ENCODE measurements at regions of chr11 and their contacts with region 1.

Region 1: DNA sequence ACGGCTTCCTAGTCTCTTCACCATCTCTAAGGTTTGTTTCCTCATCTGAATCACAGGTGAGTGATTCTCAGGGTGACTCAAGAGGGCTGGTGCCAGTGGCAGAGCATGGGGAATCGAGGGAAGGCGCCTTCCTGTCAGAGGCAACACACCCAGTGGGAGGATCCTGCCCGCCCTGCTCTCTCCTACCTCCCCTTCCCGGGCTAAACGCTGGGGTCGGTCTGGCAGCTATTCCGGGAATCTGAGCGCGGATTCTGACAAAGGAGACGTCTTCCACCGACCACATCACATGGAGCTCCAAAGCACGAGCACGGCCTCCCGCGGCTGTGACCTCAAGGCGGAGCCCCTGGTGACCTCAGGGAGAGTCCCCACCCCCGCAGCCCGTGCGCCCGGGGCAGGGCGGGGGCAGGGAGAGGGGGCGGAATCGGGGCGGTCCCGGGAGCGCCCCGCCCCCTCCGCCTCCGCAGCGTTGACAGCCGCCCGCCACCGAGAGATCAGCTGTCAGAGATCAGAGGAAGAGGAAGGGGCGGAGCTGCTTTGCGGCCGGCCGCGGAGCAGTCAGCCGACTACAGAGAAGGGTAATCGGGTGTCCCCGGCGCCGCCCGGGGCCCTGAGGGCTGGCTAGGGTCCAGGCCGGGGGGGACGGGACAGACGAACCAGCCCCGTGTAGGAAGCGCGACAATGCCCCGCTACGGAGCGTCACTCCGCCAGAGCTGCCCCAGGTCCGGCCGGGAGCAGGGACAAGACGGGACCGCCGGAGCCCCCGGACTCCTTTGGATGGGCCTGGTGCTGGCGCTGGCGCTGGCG is at the start of gene SMPD1:
- DNase-seq: peak; percentile 95 to 97
- H3K4me3 ChIP-seq: peak within 1 kb of the TSS; percentile 64 to 81
- H3K27ac ChIP-seq: peak within 1 kb of the TSS; percentile 81 to 92
- H3K4me1 ChIP-seq: peaks cover 0 to 23% (median 13%) of the 10 kb centered on the region in 4 donors
- H3K27me3 ChIP-seq: no peaks in the 10 kb centered on the region
- CTCF ChIP-seq: no peak

Region 2: DNA sequence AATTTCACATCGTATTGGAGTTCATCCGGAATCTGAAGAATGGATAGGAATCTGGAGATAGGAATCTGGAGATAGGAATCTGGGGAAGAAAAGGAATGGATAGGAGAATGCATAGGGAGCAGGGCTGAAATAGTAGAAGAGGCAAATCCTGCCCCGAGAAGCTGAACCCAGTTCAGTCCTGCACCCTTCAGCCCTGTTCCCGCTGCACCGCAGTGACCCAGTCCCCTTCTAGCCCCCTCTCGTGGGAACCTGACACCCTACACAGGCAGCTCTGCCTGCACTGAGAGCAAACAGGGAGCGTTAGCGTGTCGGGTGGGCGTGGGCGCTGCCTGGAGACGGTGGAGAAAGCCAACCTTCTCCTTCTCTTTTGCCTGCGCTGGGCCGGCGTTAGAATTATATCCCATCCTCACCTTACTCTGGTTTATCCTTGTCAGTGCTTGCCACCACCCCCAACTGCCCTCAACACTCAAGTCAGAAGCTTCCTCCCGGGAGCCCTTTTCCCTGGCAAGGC is 131.5 kb before region 1 on chr11:
- intact Hi-C with region 1: no loop called
- DNase-seq: no peak
- H3K4me3 ChIP-seq: peak overlapping the region; percentile 33 to 50
- H3K27ac ChIP-seq: no peak overlapping the region
- H3K4me1 ChIP-seq: peaks cover 0 to 19% (median 16%) of the 10 kb centered on the region in 4 donors
- H3K27me3 ChIP-seq: peaks cover 0 to 50% of the 10 kb centered on the region in 2 donors
- CTCF ChIP-seq: no peak

Region 3: DNA sequence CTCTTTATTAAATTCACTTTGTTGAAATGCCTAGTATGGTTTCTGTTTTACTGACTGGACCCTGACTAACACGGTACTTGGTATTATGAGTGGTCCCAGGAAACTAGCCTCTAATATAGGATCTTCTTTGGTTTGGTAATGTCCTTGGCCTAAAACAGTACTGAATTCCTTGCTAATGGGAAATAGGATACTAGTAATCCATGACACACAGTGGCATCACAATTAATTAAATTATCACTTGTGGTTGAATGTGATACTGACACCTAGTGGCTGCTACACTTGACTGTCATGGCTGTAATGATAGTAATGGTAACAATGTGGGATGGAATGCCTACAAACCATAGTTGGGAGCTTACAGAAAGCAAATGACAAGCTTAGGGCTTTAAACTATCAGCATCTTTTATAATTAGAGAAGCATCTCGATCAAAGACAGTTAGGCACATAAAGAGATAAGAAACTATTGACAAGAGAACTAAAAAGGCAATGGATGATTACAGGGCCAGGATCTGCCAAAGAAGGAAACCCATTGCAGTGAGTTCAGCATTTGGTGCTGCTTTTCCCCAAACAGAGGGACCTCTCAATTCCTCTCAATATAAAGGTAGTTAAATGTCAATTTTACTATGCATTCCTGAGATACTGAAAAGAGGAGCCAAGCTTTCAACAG is 115.6 kb after region 1 on chr11:
- intact Hi-C with region 1: loop called (anchors 10 kb)
- DNase-seq: no peak
- H3K4me3 ChIP-seq: no peak overlapping the region
- H3K27ac ChIP-seq: no peak overlapping the region
- H3K4me1 ChIP-seq: no peaks in the 10 kb centered on the region
- H3K27me3 ChIP-seq: no peaks in the 10 kb centered on the region
- CTCF ChIP-seq: peak; percentile 70 to 74

Region 4: GRCh38 chr11:6663794-6664469 is 273.8 kb after region 1 on chr11:
- intact Hi-C with region 1: no loop called
- DNase-seq: no peak
- H3K4me3 ChIP-seq: no peak overlapping the region
- H3K27ac ChIP-seq: no peak overlapping the region
- H3K4me1 ChIP-seq: peaks cover 0 to 8% (median 0%) of the 10 kb centered on the region in 4 donors
- H3K27me3 ChIP-seq: no peaks in the 10 kb centered on the region
- CTCF ChIP-seq: no peak